Breast epithelium (tissue), 4 donors: ENCODE measurements at regions of chrX and their contacts with region 1.

Region 1: GRCh38 chrX:11172415-11172814 is 61.3 kb downstream of the HCCS start:
- DNase-seq: no peak
- H3K4me3 ChIP-seq: no peak overlapping the region
- H3K27ac ChIP-seq: no peak overlapping the region
- H3K4me1 ChIP-seq: no peaks in the 10 kb centered on the region
- H3K27me3 ChIP-seq: peaks cover 0 to 26% of the 10 kb centered on the region in 2 donors
- CTCF ChIP-seq: no peak
- POLR2A ChIP-seq: no peak

Region 2: GRCh38 chrX:11206716-11207115 is 34.3 kb after region 1 on chrX:
- intact Hi-C with region 1: loop called (anchors 2 kb)
- DNase-seq: no peak
- H3K4me3 ChIP-seq: no peak overlapping the region
- H3K27ac ChIP-seq: no peak overlapping the region
- H3K4me1 ChIP-seq: no peaks in the 10 kb centered on the region
- H3K27me3 ChIP-seq: no peaks in the 10 kb centered on the region
- CTCF ChIP-seq: no peak
- POLR2A ChIP-seq: no peak

Region 3: GRCh38 chrX:11351375-11352295 is 179.2 kb after region 1 on chrX:
- intact Hi-C with region 1: no loop called
- DNase-seq: no peak
- H3K4me3 ChIP-seq: peak overlapping the region in 1 of 3 donors; percentile 17
- H3K27ac ChIP-seq: peak overlapping the region; percentile 11 to 67
- H3K4me1 ChIP-seq: no peaks in the 10 kb centered on the region
- H3K27me3 ChIP-seq: peaks cover 0 to 9% of the 10 kb centered on the region in 2 donors
- CTCF ChIP-seq: no peak
- POLR2A ChIP-seq: no peak

Region 4: DNA sequence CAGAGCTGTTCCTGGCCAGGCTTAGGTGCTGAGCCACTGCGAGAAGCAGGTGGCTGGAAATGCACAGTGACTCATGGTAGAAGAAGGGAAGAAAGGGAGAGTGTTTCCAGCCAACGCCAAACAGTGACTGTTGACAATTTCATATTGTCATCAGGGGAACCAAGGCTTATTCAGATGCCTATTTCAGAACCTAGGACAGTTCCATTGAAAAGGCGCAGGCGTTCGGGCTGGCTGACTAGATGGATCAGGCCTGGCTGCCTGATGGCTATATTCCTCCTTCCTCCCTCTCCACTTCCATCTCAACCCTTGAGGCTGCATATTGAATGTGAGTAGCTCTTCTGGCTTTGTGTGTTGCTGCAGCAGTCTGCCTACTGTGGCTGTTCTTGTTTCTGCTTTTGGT is 892.8 kb after region 1 on chrX:
- intact Hi-C with region 1: no loop called
- DNase-seq: no peak
- H3K4me3 ChIP-seq: no peak overlapping the region
- H3K27ac ChIP-seq: no peak overlapping the region
- H3K4me1 ChIP-seq: no peaks in the 10 kb centered on the region
- H3K27me3 ChIP-seq: peaks cover 0 to 37% of the 10 kb centered on the region in 2 donors
- CTCF ChIP-seq: no peak
- POLR2A ChIP-seq: no peak